Activated CD4-positive, alpha-beta T cell treated with anti-CD3 and anti-CD28 coated beads, Interleukin-2, amount 10 ng/mL, durations not matched to agents 24 days and 14 days (primary cell): ENCODE measurements at regions of chr13 and their contacts with region 1.

Region 1: DNA sequence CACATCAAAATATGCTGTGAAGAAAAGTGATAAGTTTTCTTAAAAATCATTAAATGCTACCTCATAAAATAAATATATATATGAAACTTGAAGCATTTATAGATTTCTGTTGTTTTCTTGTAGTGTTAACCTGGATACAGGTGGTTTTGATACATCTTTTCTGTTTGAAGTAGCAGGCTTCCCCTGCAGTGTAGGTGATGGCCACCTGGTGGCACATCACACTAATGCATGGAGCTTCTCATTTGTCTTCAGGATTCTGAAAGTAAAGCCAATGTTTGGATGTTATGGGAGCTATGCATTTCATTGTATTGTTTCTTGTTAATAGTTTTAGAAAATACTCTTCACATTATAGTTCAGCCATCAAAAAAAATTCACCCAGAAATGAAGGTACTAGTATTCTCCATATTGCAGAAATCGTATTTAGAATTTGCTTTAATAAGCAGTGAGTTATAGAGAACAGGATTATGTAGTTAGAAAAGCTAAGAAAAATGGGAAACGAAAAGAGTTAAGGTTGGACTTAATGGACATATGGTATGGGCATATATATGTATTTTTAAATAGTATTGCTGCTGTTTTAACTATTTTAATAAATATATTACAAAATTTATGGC is 18.7 kb downstream of the GPR180 start:
- DNase-seq: peak; percentile 78
- H3K4me3 Mint-ChIP-seq: no peak overlapping the region
- H3K27ac Mint-ChIP-seq: no peak overlapping the region
- H3K4me1 Mint-ChIP-seq: peaks cover 8% of the 10 kb centered on the region
- H3K27me3 Mint-ChIP-seq: no peaks in the 10 kb centered on the region

Region 2: GRCh38 chr13:94233401-94233800 is 387.0 kb before region 1 on chr13:
- intact Hi-C with region 1: loop called (anchors 10 kb)
- DNase-seq: no peak
- H3K4me3 Mint-ChIP-seq: no peak overlapping the region
- H3K27ac Mint-ChIP-seq: no peak overlapping the region
- H3K4me1 Mint-ChIP-seq: peaks cover 18% of the 10 kb centered on the region
- H3K27me3 Mint-ChIP-seq: peaks cover 2% of the 10 kb centered on the region

Region 3: DNA sequence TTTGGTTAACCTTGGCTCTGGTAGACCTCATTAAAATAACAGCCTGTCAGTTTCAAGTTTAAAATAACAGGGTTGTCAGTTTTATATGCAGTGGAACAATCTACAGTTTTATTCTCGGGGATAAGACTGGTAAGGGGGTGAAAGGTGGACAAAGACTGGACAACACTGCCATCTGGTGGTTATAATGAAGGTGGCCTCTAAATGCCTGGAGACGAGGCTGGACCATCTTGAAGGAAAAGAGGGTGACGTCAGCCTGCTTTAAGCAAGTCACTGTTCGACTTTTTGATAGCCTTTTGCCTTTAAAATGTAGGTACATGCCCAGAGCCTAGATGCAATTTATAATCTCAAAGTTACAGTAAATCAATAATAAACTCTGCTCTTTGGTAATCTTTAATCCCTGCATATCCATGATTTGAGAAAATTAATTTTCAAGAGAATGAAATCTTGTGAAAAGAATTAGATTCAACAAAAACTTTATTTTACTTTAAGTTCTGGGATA is 257.9 kb before region 1 on chr13:
- intact Hi-C with region 1: loop called (anchors 1 kb)
- DNase-seq: peak; percentile 90
- H3K4me3 Mint-ChIP-seq: no peak overlapping the region
- H3K27ac Mint-ChIP-seq: no peak overlapping the region
- H3K4me1 Mint-ChIP-seq: peaks cover 2% of the 10 kb centered on the region
- H3K27me3 Mint-ChIP-seq: peaks cover 7% of the 10 kb centered on the region

Region 4: GRCh38 chr13:94435604-94436226 is 184.7 kb before region 1 on chr13:
- intact Hi-C with region 1: loop called (anchors 1 kb)
- DNase-seq: peak; percentile 63
- H3K4me3 Mint-ChIP-seq: no peak overlapping the region
- H3K27ac Mint-ChIP-seq: no peak overlapping the region
- H3K4me1 Mint-ChIP-seq: peaks cover 9% of the 10 kb centered on the region
- H3K27me3 Mint-ChIP-seq: peaks cover 6% of the 10 kb centered on the region

Region 5: DNA sequence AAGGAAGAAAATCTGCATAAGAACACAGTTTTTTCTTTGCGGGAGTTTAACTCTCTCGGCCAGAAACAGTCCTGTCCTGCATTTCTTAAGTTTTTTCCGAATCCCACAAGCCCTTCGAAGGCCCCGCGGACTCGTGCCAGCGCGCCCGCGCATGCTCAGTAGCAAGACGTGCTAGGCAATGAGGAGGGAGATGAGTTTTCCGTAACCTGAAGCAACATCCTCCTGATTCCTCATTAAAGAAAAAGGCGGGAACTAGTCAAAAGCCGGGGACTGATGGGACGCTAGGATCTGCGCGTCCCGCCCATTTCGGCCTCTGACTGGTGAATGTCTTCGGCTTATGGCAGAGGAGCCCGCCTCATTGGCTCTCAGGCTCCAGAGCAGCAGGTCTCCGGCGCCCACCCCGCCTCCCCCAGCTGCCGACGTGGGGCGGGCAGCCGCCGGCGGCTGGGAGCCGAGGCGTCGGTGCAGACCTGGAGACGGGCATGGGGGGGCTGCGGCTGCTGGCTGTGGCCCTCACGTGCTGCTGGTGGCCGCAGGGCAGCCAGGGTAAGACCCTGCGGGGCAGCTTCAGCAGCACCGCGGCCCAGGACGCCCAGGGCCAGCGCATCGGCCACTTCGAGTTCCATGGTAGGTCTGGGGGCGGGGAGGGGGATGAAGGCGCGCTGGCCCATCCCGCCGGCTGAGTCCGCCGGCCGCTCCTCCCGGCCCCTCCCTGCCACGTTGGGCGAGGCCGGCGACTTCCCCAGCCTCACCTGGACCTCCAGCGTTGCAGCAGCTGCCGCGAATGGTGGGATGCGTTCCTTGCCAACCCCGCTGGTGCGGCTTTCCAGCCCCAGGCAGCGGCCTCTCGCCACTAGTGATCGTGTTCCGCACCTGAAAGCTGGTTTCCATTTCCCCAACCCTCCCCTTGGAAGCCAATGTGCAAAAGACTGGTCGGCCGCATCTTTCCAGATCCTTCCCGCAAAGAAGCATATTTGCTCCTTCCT is 18.7 kb before region 1 on chr13 and contains the start of gene GPR180:
- intact Hi-C with region 1: loop called (anchors 2 kb)
- DNase-seq: peak; percentile 97
- H3K4me3 Mint-ChIP-seq: peak within 1 kb of the TSS; percentile 89
- H3K27ac Mint-ChIP-seq: peak within 1 kb of the TSS; percentile 79
- H3K4me1 Mint-ChIP-seq: peaks cover 27% of the 10 kb centered on the region
- H3K27me3 Mint-ChIP-seq: no peaks in the 10 kb centered on the region
- total RNA-seq, gene GPR180: 9.8 and 10.3 TPM in 2 replicates

Region 6: GRCh38 chr13:94660695-94661326 is 40.4 kb after region 1 on chr13:
- intact Hi-C with region 1: loop called (anchors 5 kb)
- DNase-seq: no peak
- H3K4me3 Mint-ChIP-seq: no peak overlapping the region
- H3K27ac Mint-ChIP-seq: no peak overlapping the region
- H3K4me1 Mint-ChIP-seq: peaks cover 35% of the 10 kb centered on the region
- H3K27me3 Mint-ChIP-seq: peaks cover 16% of the 10 kb centered on the region